ENCODE measurements at regions of chr2 and their contacts with region 1.

Region 1: DNA sequence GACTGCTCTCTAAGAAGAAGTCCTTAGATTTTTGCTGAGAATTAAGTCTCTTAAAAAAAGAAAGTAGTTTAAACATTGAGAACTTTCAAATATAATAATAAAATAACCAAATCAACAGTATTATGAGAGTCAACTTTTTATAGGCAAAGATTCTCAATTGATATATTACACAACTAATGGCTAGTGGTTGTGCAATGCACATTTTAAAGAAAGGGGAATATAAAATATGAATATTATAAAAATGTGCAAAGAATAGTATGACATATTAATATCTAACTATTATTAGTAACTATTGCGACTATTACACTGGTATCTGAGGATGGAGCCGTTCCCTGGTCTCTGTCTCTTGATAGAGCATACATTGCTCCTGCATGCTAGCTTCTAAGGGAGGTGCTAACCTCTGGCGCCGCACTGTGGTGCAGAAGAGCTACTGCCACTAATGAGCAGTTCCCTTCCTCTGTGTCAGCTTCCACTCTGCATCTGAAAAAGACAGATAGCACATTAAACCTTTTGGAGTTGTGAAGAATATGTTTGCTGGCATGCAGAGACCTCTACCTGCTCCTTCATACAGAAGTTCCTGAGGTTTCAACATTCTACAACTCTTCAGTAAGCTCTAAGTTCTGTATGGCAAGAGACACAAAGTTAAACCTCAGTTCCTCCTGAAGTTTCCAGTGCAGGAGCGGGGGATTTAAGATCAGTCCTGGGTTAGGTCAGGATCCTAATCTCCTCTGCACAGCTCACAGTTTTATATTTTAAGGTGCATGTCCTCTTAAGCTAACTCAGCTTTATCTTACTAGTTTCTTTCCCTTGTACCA is 3.5 kb upstream of the SLC9A2 start:
- DNase-seq: peak; percentile 68 to 81 (median 77)
- ATAC-seq: peak; percentile 85
- H3K4me3 ChIP-seq: no peak overlapping the region
- H3K27ac ChIP-seq: no peak overlapping the region
- H3K4me1 ChIP-seq: peaks cover 6 to 18% of the 10 kb centered on the region in 2 experiments; a peak in 4 of 5 replicates
- H3K27me3 ChIP-seq: no peaks in the 10 kb centered on the region
- CTCF ChIP-seq: peak; percentile 87 to 92 (median 91)
- EP300 ChIP-seq: no peak
- POLR2A ChIP-seq: no peak
- RAD21 ChIP-seq: peak; percentile 88 to 90

Region 2: GRCh38 chr2:102278720-102279390 is 337.0 kb before region 1 on chr2:
- CTCF ChIA-PET with region 1: no interaction called
- POLR2A ChIA-PET with region 1: no interaction called
- in situ Hi-C with region 1: no loop called
- intact Hi-C with region 1: no loop called
- DNase-seq: no peak
- ATAC-seq: no peak
- H3K4me3 ChIP-seq: no peak overlapping the region
- H3K27ac ChIP-seq: no peak overlapping the region
- H3K4me1 ChIP-seq: no peaks in the 10 kb centered on the region; a peak in 1 of 5 replicates
- H3K27me3 ChIP-seq: peaks cover 0 to 2% of the 10 kb centered on the region in 2 experiments; a peak in 2 of 5 replicates
- CTCF ChIP-seq: no peak
- EP300 ChIP-seq: no peak
- POLR2A ChIP-seq: no peak
- RAD21 ChIP-seq: no peak

Region 3: DNA sequence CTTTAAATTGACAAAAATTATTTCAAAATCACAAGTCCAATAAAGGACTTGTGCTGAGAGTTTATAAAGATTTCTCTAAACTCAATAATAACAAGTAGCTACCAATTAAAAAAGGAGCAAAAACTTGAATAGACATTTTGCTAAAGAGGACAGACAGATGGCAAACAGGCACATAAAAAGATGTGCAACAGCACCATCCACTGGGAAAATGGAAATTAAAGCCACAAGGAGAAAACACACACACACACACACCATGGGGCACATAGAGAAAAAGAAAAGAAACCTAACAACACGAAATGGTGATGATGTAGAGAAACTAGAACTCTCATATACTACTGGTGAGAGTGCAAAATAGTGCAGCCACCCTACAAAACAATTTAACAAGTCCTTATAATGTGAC is 155.4 kb before region 1 on chr2:
- CTCF ChIA-PET with region 1: no interaction called
- POLR2A ChIA-PET with region 1: no interaction called
- in situ Hi-C with region 1: no loop called
- intact Hi-C with region 1: no loop called
- DNase-seq: peak in 1 of 4 experiments; percentile 24
- ATAC-seq: peak; percentile 57; the same call in 2 of the 3 replicates
- H3K4me3 ChIP-seq: no peak overlapping the region
- H3K27ac ChIP-seq: no peak overlapping the region
- H3K4me1 ChIP-seq: no peaks in the 10 kb centered on the region
- H3K27me3 ChIP-seq: peaks cover 5 to 7% of the 10 kb centered on the region in 2 experiments; a peak in 3 of 5 replicates
- CTCF ChIP-seq: peak; percentile 25 to 48 (median 47); a peak in 5 of 6 replicates
- EP300 ChIP-seq: no peak
- POLR2A ChIP-seq: no peak
- RAD21 ChIP-seq: peak; percentile 48 to 74

Region 4: GRCh38 chr2:102473020-102473419 is 142.8 kb before region 1 on chr2 and contains the start of gene SLC9A4:
- CTCF ChIA-PET with region 1: interaction called, 10 read pairs
- POLR2A ChIA-PET with region 1: no interaction called
- in situ Hi-C with region 1: no loop called
- intact Hi-C with region 1: loop called (anchors 2 kb)
- DNase-seq: peak; percentile 25 to 60 (median 53)
- ATAC-seq: peak; percentile 72
- H3K4me3 ChIP-seq: no peak within 1 kb of the TSS
- H3K27ac ChIP-seq: no peak within 1 kb of the TSS
- H3K4me1 ChIP-seq: no peaks in the 10 kb centered on the region
- H3K27me3 ChIP-seq: peaks cover 0 to 5% of the 10 kb centered on the region in 2 experiments; a peak in 2 of 5 replicates
- CTCF ChIP-seq: peak; percentile 59 to 82 (median 80)
- EP300 ChIP-seq: no peak
- POLR2A ChIP-seq: no peak
- RAD21 ChIP-seq: peak; percentile 68 to 80
- polyA plus RNA-seq, gene SLC9A4: 0.15 TPM in 1 of 2 experiments, not detected in the other

Region 5: GRCh38 chr2:102520028-102520427 is 95.8 kb before region 1 on chr2:
- CTCF ChIA-PET with region 1: interaction called, 7 read pairs
- POLR2A ChIA-PET with region 1: no interaction called
- in situ Hi-C with region 1: loop called (anchors 10 kb)
- intact Hi-C with region 1: loop called (anchors 2 kb)
- DNase-seq: peak; percentile 24 to 70 (median 42)
- ATAC-seq: peak; percentile 92
- H3K4me3 ChIP-seq: no peak overlapping the region
- H3K27ac ChIP-seq: no peak overlapping the region
- H3K4me1 ChIP-seq: no peaks in the 10 kb centered on the region
- H3K27me3 ChIP-seq: peaks cover 5 to 9% of the 10 kb centered on the region in 2 experiments; a peak in 2 of 5 replicates
- CTCF ChIP-seq: peak; percentile 75 to 91 (median 84)
- EP300 ChIP-seq: no peak
- POLR2A ChIP-seq: no peak
- RAD21 ChIP-seq: peak; percentile 73 to 89

Region 6: GRCh38 chr2:102637358-102637757 is 21.5 kb after region 1 on chr2:
- CTCF ChIA-PET with region 1: no interaction called
- POLR2A ChIA-PET with region 1: no interaction called
- in situ Hi-C with region 1: no loop called
- intact Hi-C with region 1: loop called (anchors 2 kb)
- DNase-seq: no peak
- ATAC-seq: peak; percentile 3; the same call in 1 of the 3 replicates
- H3K4me3 ChIP-seq: no peak overlapping the region
- H3K27ac ChIP-seq: peak overlapping the region; percentile 86; the same call in 2 of the 3 replicates
- H3K4me1 ChIP-seq: peaks cover 12 to 47% of the 10 kb centered on the region in 2 experiments
- H3K27me3 ChIP-seq: no peaks in the 10 kb centered on the region
- CTCF ChIP-seq: peak; percentile 10 to 29 (median 27); a peak in 2 of 6 replicates
- EP300 ChIP-seq: no peak
- POLR2A ChIP-seq: no peak
- RAD21 ChIP-seq: peak in 1 of 2 experiments; percentile 21; a peak in 2 of 4 replicates

Region 7: DNA sequence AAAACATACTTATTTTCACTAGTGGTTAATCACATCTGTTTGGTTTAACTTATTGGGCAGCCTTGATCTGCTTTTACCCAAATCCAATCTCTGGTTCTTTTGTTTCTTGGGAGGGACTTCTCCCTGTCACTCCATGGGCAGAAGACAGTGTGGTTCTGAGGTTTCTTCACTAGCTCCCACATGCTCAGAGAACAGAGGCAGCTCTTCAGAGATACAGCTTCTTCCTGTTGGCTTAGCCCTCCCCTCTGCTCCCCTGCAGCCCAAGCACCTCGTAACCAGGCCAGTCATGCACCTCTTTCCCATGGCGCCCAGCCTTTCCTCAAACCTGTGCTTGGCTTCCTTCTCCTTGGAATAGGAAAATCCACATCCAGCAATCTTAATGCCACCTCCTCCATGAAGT is 36.3 kb after region 1 on chr2:
- CTCF ChIA-PET with region 1: no interaction called
- POLR2A ChIA-PET with region 1: no interaction called
- in situ Hi-C with region 1: no loop called
- intact Hi-C with region 1: loop called (anchors 5 kb)
- DNase-seq: no peak
- ATAC-seq: peak; percentile 55
- H3K4me3 ChIP-seq: no peak overlapping the region
- H3K27ac ChIP-seq: no peak overlapping the region
- H3K4me1 ChIP-seq: peaks cover 4 to 12% of the 10 kb centered on the region in 2 experiments; a peak in 3 of 5 replicates
- H3K27me3 ChIP-seq: no peaks in the 10 kb centered on the region
- CTCF ChIP-seq: no peak
- EP300 ChIP-seq: no peak
- POLR2A ChIP-seq: no peak
- RAD21 ChIP-seq: no peak

Region 8: DNA sequence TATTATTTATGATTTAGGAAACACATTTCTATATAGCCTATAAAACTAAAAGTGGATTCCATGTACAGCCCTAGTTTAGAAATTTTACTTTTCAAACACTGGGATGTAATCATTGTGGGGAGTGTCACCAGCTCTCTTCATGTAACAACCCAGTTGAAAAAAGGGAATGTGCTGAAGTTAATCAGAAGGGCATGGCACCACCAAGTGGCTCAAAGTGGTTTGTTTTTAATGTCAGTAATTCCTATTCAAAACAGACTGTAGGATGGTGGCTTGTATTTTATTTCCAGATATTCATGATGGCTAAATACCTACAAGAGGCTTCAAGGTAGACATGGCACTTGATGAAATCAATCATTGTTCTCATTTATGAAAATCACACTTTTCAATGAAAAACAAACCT is 87.9 kb after region 1 on chr2:
- CTCF ChIA-PET with region 1: interaction called, 6 read pairs
- POLR2A ChIA-PET with region 1: no interaction called
- in situ Hi-C with region 1: no loop called
- intact Hi-C with region 1: loop called (anchors 5 kb)
- DNase-seq: peak; percentile 23 to 58 (median 43)
- ATAC-seq: peak; percentile 94
- H3K4me3 ChIP-seq: no peak overlapping the region
- H3K27ac ChIP-seq: no peak overlapping the region
- H3K4me1 ChIP-seq: peaks cover 0 to 5% of the 10 kb centered on the region in 2 experiments; a peak in 2 of 5 replicates
- H3K27me3 ChIP-seq: no peaks in the 10 kb centered on the region
- CTCF ChIP-seq: peak; percentile 58 to 85 (median 66)
- EP300 ChIP-seq: no peak
- POLR2A ChIP-seq: no peak
- RAD21 ChIP-seq: peak; percentile 89 to 90

Region 9: GRCh38 chr2:102806250-102806837 is 190.5 kb after region 1 on chr2:
- CTCF ChIA-PET with region 1: no interaction called
- POLR2A ChIA-PET with region 1: interaction called, 4 read pairs
- in situ Hi-C with region 1: no loop called
- intact Hi-C with region 1: loop called (anchors 10 kb)
- DNase-seq: peak; percentile 62 to 74 (median 68)
- ATAC-seq: peak; percentile 95
- H3K4me3 ChIP-seq: no peak overlapping the region
- H3K27ac ChIP-seq: no peak overlapping the region
- H3K4me1 ChIP-seq: no peaks in the 10 kb centered on the region; a peak in 3 of 5 replicates
- H3K27me3 ChIP-seq: no peaks in the 10 kb centered on the region
- CTCF ChIP-seq: peak; percentile 76 to 83 (median 82)
- EP300 ChIP-seq: no peak
- POLR2A ChIP-seq: no peak
- RAD21 ChIP-seq: peak; percentile 45 to 73